Activated naive CD4-positive, alpha-beta T cell treated with anti-CD3 and anti-CD28 coated beads for 36 hours (primary cell): ENCODE measurements at regions of chr11 and their contacts with region 1.

Region 1: GRCh38 chr11:117807482-117808327 is 10.7 kb upstream of the DSCAML1 start:
- DNase-seq: peak; percentile 87
- H3K4me3 Mint-ChIP-seq: no peak overlapping the region
- H3K27ac Mint-ChIP-seq: no peak overlapping the region
- H3K4me1 Mint-ChIP-seq: peaks cover 13% of the 10 kb centered on the region
- H3K27me3 Mint-ChIP-seq: no peaks in the 10 kb centered on the region

Region 2: GRCh38 chr11:117426269-117426685 is 381.4 kb before region 1 on chr11:
- CTCF ChIA-PET with region 1: interaction called, 39 read pairs
- intact Hi-C with region 1: loop called (anchors 2 kb)
- DNase-seq: peak; percentile 84
- H3K4me3 Mint-ChIP-seq: no peak overlapping the region
- H3K27ac Mint-ChIP-seq: no peak overlapping the region
- H3K4me1 Mint-ChIP-seq: no peaks in the 10 kb centered on the region
- H3K27me3 Mint-ChIP-seq: peaks cover 4% of the 10 kb centered on the region

Region 3: DNA sequence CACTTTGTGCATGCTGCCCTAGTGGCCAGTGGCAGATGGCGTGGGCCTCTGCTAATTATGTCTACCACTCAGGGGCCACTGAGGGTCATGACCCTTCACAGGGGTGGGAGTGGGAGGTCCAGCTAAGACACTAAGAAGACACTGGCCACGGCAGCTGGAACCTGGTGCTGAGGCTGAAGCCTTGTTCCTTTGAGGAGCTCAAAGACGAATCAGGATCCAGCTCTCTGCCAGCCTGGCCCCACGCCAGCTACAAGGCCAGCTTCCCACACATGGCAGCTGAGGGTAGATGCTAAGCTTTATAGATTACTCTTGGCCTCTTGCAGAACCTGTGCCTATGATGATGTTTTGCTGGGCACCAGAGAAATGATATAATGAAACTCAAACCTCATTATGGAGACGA is 237.0 kb before region 1 on chr11:
- CTCF ChIA-PET with region 1: no interaction called
- intact Hi-C with region 1: no loop called
- DNase-seq: no peak
- H3K4me3 Mint-ChIP-seq: no peak overlapping the region
- H3K27ac Mint-ChIP-seq: no peak overlapping the region
- H3K4me1 Mint-ChIP-seq: no peaks in the 10 kb centered on the region
- H3K27me3 Mint-ChIP-seq: no peaks in the 10 kb centered on the region

Region 4: GRCh38 chr11:117796872-117797529 is 10.7 kb before region 1 on chr11 and contains the start of gene DSCAML1:
- CTCF ChIA-PET with region 1: interaction called, 15 read pairs
- intact Hi-C with region 1: no loop called
- DNase-seq: peak; percentile 32
- H3K4me3 Mint-ChIP-seq: peak within 1 kb of the TSS; percentile 43
- H3K27ac Mint-ChIP-seq: no peak within 1 kb of the TSS
- H3K4me1 Mint-ChIP-seq: peaks cover 15% of the 10 kb centered on the region
- H3K27me3 Mint-ChIP-seq: peaks cover 45% of the 10 kb centered on the region
- total RNA-seq, gene DSCAML1: 0.17 to 0.30 TPM

Region 5: GRCh38 chr11:117828611-117829368 is 21.1 kb after region 1 on chr11:
- CTCF ChIA-PET with region 1: interaction called, 258 read pairs
- intact Hi-C with region 1: loop called (anchors 2 kb)
- DNase-seq: peak; percentile 92
- H3K4me3 Mint-ChIP-seq: no peak overlapping the region
- H3K27ac Mint-ChIP-seq: peak overlapping the region; percentile 46
- H3K4me1 Mint-ChIP-seq: peaks cover 50% of the 10 kb centered on the region
- H3K27me3 Mint-ChIP-seq: no peaks in the 10 kb centered on the region

Region 6: DNA sequence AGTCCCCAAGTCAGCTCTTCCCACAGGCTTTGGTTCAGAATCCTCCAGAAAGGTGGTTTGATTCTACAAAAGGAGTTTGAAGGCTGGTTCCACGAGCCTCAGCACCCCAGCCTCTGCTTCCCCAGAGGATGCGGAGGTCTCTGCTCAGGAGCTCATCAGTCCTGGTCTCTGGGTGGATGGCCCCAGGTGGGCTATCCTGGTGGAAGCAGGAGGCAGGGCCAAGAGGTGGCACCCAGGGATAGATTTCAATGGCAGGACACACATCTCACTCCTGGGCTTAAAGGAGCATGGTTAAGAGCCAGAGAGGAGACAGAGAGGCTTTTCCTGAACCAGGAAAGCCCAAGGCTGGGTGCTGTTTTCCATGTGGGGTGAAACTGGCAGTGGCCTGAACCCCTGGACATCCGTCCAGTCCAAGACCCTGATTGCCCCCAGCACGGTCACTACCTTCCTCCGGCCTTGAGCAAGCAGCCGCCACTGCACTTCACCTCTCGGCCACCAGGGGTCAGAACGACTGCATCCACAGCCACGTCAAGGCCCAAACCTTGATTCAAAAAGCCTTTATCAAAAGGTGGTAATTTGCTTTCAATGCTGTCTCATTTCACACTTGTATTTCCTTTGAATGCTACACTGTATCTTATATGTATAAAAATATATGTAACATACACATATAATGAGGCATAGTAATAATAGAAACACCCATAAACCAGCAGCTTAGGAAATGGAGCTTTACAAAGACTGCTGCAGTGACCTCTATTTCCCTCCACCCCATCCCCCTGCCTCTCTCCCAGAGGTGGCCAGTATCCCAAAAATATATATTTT is 36.2 kb after region 1 on chr11:
- CTCF ChIA-PET with region 1: interaction called, 10 read pairs
- intact Hi-C with region 1: no loop called
- DNase-seq: peak; percentile 90
- H3K4me3 Mint-ChIP-seq: no peak overlapping the region
- H3K27ac Mint-ChIP-seq: no peak overlapping the region
- H3K4me1 Mint-ChIP-seq: no peaks in the 10 kb centered on the region
- H3K27me3 Mint-ChIP-seq: no peaks in the 10 kb centered on the region

Region 7: GRCh38 chr11:117861151-117862018 is 53.7 kb after region 1 on chr11:
- CTCF ChIA-PET with region 1: no interaction called
- intact Hi-C with region 1: no loop called
- DNase-seq: no peak
- H3K4me3 Mint-ChIP-seq: no peak overlapping the region
- H3K27ac Mint-ChIP-seq: no peak overlapping the region
- H3K4me1 Mint-ChIP-seq: no peaks in the 10 kb centered on the region
- H3K27me3 Mint-ChIP-seq: no peaks in the 10 kb centered on the region

Region 8: GRCh38 chr11:118046051-118046963 is 238.6 kb after region 1 on chr11:
- CTCF ChIA-PET with region 1: interaction called, 91 read pairs
- intact Hi-C with region 1: loop called (anchors 1 kb)
- DNase-seq: peak; percentile 52
- H3K4me3 Mint-ChIP-seq: no peak overlapping the region
- H3K27ac Mint-ChIP-seq: peak overlapping the region; percentile 63
- H3K4me1 Mint-ChIP-seq: peaks cover 78% of the 10 kb centered on the region
- H3K27me3 Mint-ChIP-seq: no peaks in the 10 kb centered on the region

Region 9: DNA sequence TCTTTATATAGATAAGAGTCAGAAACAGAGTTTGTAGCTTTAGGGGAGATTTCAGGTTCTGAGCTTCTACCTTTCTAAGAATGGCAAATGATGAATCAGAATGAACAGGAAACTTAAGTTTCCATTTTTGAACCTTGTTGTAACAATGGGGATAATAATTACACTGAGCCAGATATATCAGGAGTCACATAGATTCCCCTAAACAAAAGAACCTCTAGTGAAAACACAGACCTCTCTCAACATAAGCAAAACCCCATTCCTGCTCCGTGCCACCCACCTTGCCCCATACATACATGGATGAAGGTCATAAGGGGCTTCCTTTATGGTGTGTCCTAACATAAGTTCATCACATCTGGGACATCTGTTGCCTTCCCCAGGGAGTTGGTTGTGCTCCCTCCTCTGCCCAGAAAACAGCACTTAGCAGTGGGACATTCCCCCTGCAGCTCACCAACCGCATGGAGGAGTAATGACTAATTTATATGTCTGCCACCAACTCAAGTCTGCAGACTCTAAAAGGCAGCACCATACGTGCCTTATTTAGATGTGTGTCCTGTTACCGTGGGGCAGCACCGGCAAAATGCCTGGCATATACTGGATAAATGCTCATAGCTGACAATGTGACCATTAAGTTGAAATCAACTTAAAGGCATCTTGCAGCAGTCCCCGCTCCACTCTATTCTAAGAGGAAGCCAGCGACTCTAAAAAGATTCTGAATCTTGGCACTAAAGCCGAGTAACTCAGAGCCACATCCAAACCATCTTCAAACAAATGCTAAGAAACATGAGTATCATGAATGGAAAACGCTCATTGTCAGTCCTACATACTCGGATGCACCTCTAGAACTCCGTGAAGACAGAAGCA is 409.1 kb after region 1 on chr11:
- CTCF ChIA-PET with region 1: no interaction called
- intact Hi-C with region 1: no loop called
- DNase-seq: peak; percentile 83
- H3K4me3 Mint-ChIP-seq: peak overlapping the region; percentile 64
- H3K27ac Mint-ChIP-seq: peak overlapping the region; percentile 100
- H3K4me1 Mint-ChIP-seq: peaks cover 94% of the 10 kb centered on the region
- H3K27me3 Mint-ChIP-seq: no peaks in the 10 kb centered on the region